Sigmoid colon (tissue), 7 donors: ENCODE measurements at regions of chrX and their contacts with region 1.

Region 1: GRCh38 chrX:129925305-129926092 is 19.5 kb downstream of the UTP14A start:
- DNase-seq: peak; percentile 82
- H3K4me3 ChIP-seq: no peak overlapping the region
- H3K27ac ChIP-seq: no peak overlapping the region
- H3K4me1 ChIP-seq: no peaks in the 10 kb centered on the region
- H3K27me3 ChIP-seq: no peaks in the 10 kb centered on the region
- CTCF ChIP-seq: peak; percentile 16 to 66 (median 50)
- EP300 ChIP-seq: no peak
- POLR2A ChIP-seq: no peak

Region 2: DNA sequence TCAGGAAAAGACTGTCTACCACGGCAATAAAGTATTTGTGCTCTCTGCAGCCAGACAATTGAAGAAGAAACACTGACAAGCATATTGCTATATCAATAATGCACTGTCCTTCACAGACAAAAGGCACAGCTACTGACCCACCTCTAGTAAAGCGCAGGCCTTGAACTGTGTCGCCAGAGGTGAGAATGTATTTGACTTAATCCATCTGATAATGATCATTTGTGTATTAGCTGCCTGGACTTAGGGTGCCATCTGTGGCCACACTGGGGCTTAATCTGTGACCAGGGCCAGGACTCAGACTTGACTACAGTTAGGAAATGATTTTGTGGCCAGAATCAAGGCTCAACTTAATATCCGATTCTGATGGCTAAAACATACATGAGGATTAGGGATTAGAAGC is 662.6 kb before region 1 on chrX:
- intact Hi-C with region 1: no loop called
- DNase-seq: no peak
- H3K4me3 ChIP-seq: no peak overlapping the region
- H3K27ac ChIP-seq: no peak overlapping the region
- H3K4me1 ChIP-seq: no peaks in the 10 kb centered on the region
- H3K27me3 ChIP-seq: no peaks in the 10 kb centered on the region
- CTCF ChIP-seq: no peak
- EP300 ChIP-seq: no peak
- POLR2A ChIP-seq: no peak

Region 3: DNA sequence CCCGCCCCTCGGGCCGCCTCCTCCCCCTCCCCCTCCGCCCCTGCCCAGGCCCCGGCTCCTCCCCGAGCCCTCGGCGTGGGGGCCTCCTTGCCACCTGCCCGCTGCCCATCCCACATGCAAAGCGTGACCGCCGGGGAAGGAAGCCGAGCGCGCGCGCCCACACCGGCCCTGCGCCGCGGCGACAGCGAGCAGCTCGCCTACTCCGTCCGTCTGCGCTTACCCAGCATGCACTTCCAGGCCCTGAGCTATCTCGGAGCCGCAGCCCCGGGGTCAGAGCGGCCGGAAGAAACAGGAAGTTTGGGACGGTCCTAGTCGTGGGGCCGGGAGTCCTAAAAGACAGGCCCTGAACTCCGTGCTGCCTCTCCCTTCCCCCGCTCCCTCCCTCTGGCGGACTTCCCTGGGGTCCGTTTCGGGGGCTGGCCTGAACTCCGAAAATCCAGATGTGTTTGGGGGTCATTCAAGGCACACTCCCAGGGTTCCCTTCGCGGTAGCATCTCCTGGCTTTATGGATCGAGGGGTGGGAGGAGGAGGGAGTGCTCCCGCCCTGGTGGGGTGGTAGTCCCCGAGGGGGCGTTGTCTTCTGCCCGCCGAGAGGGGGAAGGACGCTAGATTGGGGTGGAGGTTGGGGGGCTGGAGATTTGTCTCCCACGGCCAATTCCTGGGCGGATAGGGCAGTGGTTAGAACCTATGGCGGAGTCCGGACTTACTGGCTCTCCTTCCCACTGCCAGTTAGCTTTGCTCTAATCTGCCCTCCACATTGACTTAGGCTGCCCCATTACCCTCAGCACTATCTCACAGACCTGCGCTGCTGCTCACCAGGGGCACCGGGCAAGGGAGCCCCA is 32.0 kb after region 1 on chrX:
- intact Hi-C with region 1: no loop called
- DNase-seq: peak; percentile 73
- H3K4me3 ChIP-seq: peak overlapping the region; percentile 21 to 51 (median 46)
- H3K27ac ChIP-seq: peak overlapping the region; percentile 58 to 65 (median 62)
- H3K4me1 ChIP-seq: peaks cover 0 to 10% (median 5%) of the 10 kb centered on the region in 4 donors
- H3K27me3 ChIP-seq: no peaks in the 10 kb centered on the region
- CTCF ChIP-seq: no peak
- EP300 ChIP-seq: no peak
- POLR2A ChIP-seq: no peak

Region 4: GRCh38 chrX:130028196-130028595 is 102.7 kb after region 1 on chrX:
- intact Hi-C with region 1: loop called (anchors 2 kb)
- DNase-seq: no peak
- H3K4me3 ChIP-seq: no peak overlapping the region
- H3K27ac ChIP-seq: no peak overlapping the region
- H3K4me1 ChIP-seq: peaks cover 0 to 6% (median 3%) of the 10 kb centered on the region in 4 donors
- H3K27me3 ChIP-seq: no peaks in the 10 kb centered on the region
- CTCF ChIP-seq: peak; percentile 27 to 62 (median 39)
- EP300 ChIP-seq: no peak
- POLR2A ChIP-seq: no peak

Region 5: GRCh38 chrX:130060122-130061069 is 134.9 kb after region 1 on chrX:
- intact Hi-C with region 1: loop called (anchors 1 kb)
- DNase-seq: peak; percentile 86
- H3K4me3 ChIP-seq: peak overlapping the region; percentile 30 to 58 (median 54)
- H3K27ac ChIP-seq: peak overlapping the region; percentile 55 to 76 (median 72)
- H3K4me1 ChIP-seq: peaks cover 0 to 21% (median 7%) of the 10 kb centered on the region in 4 donors
- H3K27me3 ChIP-seq: no peaks in the 10 kb centered on the region
- CTCF ChIP-seq: peak; percentile 67 to 88 (median 75)
- EP300 ChIP-seq: no peak
- POLR2A ChIP-seq: no peak